ENCODE measurements at regions of chr9 and their contacts with region 1.

Region 1: GRCh38 chr9:136728080-136728547 is 14.6 kb downstream of the LCN10 start:
- DNase-seq: peak; percentile 91
- H3K4me3 Mint-ChIP-seq: peak overlapping the region; percentile 92
- H3K27ac Mint-ChIP-seq: no peak overlapping the region
- H3K4me1 Mint-ChIP-seq: peaks cover 32% of the 10 kb centered on the region
- H3K27me3 Mint-ChIP-seq: no peaks in the 10 kb centered on the region

Region 2: DNA sequence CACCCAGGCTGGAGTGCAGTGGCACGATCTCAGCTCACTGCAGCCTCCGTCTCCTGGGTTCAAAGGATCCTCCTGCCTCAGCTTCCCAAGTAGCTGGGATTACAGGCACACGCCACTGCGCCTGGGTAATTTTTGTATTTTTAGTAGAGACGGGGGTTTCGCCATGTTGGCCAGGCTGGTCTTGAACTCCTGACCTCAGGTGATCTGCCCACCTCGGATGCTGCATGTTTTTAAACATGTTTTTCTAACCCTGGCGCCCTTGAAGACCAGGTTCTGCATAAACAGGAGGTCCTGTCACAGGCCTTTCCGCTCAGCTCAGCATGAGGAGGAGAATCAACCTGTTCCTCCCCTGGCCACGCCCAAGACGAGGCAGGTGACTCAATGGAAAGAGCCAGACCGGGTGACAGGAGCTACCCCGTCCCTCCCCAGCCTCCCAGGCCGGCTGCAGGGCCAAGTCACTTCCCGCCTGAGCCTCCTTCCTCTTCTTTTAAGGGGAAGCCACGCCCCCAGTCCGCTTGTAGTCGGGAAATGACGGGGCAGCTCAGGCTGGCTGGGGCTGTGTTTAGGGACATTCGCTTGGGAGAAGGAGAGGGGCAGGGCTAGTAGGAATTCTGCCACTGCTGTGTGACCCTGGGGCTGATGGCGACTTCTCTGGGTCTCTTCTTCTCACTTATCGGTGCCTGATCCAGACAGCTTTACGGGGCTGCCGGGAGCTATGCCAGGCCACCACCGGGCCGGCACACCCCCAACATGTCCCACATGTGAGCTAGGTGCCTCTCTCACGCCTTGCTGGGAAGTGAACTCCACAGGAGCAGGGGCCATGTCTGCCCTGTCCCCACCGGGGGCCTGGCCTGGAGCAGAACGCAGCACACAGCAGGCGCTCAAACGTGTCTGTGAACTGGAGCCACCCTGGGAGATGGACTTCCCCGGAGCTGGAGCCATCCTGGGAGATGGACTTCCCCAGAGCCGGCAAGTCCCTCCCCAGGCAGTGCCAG is 188.4 kb before region 1 on chr9:
- CTCF ChIA-PET with region 1: interaction called, 10 read pairs
- POLR2A ChIA-PET with region 1: no interaction called
- DNase-seq: peak; percentile 95
- H3K4me3 Mint-ChIP-seq: peak overlapping the region; percentile 74
- H3K27ac Mint-ChIP-seq: peak overlapping the region; percentile 98
- H3K4me1 Mint-ChIP-seq: peaks cover 75% of the 10 kb centered on the region
- H3K27me3 Mint-ChIP-seq: no peaks in the 10 kb centered on the region

Region 3: DNA sequence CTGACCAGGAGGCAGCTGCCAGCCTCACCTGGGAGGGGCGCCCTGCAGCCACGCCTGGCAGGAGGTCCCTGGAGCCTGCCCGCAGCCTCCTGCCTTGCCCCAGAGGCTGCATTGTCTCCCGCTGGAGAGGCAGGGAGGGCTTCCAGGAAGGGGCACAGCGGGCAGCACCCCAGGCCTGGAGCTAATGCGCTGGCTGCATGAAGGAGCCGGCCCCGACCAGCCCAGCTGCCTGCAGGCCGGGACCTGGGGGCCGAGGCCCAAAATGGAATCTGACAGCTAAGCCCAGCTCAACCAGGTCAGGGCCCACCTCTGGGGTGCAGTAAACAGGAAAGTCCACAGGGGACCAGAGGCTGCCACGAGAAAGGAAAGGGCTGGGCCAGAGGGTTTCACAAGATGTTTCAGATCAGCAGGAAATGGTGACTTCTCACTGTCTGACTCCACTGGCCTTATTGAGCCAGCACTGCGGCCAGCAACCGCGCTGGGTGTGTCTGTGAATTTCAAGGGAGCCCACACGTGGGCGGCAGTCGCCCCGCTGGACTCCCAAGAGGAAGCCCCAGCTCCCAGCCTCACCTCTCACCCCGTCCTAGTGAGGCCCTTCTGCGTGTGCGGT is 163.6 kb before region 1 on chr9:
- CTCF ChIA-PET with region 1: no interaction called
- POLR2A ChIA-PET with region 1: no interaction called
- DNase-seq: no peak
- H3K4me3 Mint-ChIP-seq: no peak overlapping the region
- H3K27ac Mint-ChIP-seq: no peak overlapping the region
- H3K4me1 Mint-ChIP-seq: no peaks in the 10 kb centered on the region
- H3K27me3 Mint-ChIP-seq: no peaks in the 10 kb centered on the region

Region 4: DNA sequence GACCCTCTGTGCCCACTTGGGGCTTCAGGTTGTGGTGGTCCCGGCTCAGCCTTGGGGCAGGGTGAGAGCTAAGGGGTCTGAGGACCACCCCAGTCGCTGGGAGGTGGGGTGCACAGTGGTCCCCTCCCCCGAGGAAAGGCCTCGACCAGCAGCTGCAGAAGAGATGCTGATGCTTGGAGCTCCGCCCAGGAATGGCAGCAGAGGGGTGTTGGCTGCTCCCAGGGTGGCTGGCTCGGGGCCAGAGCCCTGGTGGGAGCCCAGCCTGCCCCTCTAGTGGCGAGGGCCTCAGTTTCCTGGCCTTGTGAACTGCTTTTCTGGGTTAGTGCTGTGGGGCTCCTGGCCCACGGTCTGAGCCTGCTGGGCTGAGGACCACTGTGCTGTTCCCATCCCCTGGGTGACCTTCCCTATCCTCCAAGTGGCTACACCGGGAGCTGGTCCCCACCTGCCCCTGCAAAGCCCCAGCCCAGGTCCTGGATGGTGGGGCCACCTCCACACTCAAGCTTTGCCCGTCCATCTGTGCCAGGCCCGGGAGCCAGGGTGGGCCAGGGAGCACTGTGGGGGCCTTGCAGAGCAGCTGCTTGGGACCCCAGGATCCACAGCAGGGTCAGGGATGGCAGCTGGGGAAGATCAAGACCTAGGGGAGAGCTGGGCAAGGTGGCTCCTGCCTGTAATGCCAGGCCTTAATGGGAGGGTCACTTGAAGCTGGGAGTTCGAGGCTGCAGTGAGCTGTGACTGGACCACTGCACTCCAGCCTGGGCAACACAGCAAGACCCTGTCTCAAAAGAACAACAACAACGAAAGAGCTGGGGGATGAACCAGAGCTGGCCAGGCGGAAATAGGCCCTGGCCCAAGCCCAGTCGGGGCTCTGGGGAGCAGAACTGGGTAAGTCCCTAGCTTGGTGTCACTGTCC is 14.3 kb before region 1 on chr9:
- CTCF ChIA-PET with region 1: interaction called, 44 read pairs
- POLR2A ChIA-PET with region 1: interaction called, 6 read pairs
- DNase-seq: no peak
- H3K4me3 Mint-ChIP-seq: no peak overlapping the region
- H3K27ac Mint-ChIP-seq: no peak overlapping the region
- H3K4me1 Mint-ChIP-seq: peaks cover 3% of the 10 kb centered on the region
- H3K27me3 Mint-ChIP-seq: peaks cover 26% of the 10 kb centered on the region

Region 5: GRCh38 chr9:136742591-136743391 is 14.7 kb after region 1 on chr9 and contains the start of gene LCN10:
- CTCF ChIA-PET with region 1: interaction called, 11 read pairs
- POLR2A ChIA-PET with region 1: no interaction called
- DNase-seq: no peak
- H3K4me3 Mint-ChIP-seq: no peak within 1 kb of the TSS
- H3K27ac Mint-ChIP-seq: no peak within 1 kb of the TSS
- H3K4me1 Mint-ChIP-seq: no peaks in the 10 kb centered on the region
- H3K27me3 Mint-ChIP-seq: peaks cover 4% of the 10 kb centered on the region
- total RNA-seq, gene LCN10: not detected